ENCODE measurements at regions of chr4 and their contacts with region 1.

Region 1: DNA sequence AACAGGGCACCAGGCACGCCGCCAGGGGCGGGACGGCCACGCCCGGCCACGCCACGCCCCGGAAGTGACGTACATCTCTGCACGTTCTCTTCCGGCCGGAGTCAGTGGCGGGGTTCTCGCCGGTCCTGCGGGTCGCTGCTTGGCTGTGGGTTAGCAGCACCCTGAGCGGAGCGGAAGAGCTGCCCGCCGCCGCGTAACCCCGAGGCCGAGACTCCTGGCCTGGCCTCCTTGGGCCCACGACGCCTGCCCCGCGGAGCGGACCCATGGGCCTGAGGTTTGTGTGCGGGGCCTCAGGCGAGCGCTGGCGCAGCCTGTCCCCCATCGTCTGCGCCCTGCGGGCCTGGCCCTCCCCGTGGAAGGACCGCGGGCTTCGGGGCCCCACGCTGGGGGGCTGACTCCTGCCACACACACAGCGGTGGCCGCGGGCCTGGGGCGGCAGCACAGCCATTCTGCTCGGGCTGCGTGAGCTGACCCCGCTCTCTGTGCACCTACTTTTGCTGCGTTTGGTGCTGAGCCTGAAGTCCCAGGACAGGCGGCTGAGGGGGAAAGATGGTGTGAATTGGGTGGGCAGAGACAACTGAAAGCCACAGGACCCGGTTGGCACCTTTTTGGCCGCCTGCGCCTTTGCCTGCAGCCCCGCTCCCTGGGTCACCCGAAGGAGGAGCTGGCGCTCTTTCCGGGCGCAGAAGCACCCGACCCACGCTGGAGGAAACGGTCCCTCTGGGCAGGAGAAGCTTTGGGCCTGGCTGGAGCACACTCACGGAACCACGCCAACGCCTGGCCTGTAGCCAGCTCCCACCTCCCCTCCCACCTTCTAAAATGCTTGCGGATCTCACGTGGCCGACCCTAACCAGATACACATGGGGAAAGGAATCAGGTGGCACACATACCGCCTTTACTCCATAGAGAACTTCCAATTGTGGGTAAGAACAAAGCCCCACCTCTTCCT is 28.1 kb downstream of the NOP14 start:
- DNase-seq: peak; percentile 97
- ATAC-seq: peak; percentile 54
- H3K4me3 ChIP-seq: peak overlapping the region; percentile 8 to 96 (median 80)
- H3K4me3 Mint-ChIP-seq: peak overlapping the region; percentile 89
- H3K27ac ChIP-seq: peak overlapping the region; percentile 55 to 87
- H3K27ac Mint-ChIP-seq: peak overlapping the region; percentile 87
- H3K4me1 ChIP-seq: peaks cover 39 to 63% of the 10 kb centered on the region in 2 donors
- H3K4me1 Mint-ChIP-seq: peaks cover 55% of the 10 kb centered on the region
- H3K27me3 ChIP-seq: no peaks in the 10 kb centered on the region
- H3K27me3 Mint-ChIP-seq: no peaks in the 10 kb centered on the region
- CTCF ChIP-seq: no peak

Region 2: DNA sequence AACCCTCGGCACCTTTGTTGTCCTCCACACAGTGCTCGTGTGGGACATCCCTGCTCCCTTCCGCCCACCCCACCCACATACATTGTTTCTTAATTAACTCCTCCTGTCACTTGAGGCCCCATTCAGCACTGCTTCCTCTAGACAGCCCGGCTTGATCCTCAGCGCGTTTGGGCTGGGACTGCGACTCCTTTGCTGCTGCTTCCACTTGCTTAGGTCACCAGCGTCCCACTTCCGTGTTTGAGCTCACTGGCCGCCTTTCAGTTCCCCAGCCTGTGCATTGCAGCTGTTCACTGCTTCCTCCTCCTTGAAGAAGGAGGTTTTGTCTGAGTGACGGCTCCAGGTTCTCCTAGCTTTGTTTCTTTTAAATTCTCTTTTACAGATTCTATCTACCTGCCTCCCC is 450.1 kb before region 1 on chr4:
- CTCF ChIA-PET with region 1: no interaction called
- POLR2A ChIA-PET with region 1: no interaction called
- intact Hi-C with region 1: loop called (anchors 10 kb)
- DNase-seq: peak; percentile 90
- ATAC-seq: peak; percentile 93
- H3K4me3 ChIP-seq: peak overlapping the region; percentile 17 to 54 (median 28)
- H3K4me3 Mint-ChIP-seq: peak overlapping the region; percentile 72
- H3K27ac ChIP-seq: peak overlapping the region; percentile 76 to 89
- H3K27ac Mint-ChIP-seq: peak overlapping the region; percentile 85
- H3K4me1 ChIP-seq: peaks cover 78 to 88% of the 10 kb centered on the region in 2 donors
- H3K4me1 Mint-ChIP-seq: peaks cover 85% of the 10 kb centered on the region
- H3K27me3 ChIP-seq: no peaks in the 10 kb centered on the region
- H3K27me3 Mint-ChIP-seq: no peaks in the 10 kb centered on the region
- CTCF ChIP-seq: no peak

Region 3: DNA sequence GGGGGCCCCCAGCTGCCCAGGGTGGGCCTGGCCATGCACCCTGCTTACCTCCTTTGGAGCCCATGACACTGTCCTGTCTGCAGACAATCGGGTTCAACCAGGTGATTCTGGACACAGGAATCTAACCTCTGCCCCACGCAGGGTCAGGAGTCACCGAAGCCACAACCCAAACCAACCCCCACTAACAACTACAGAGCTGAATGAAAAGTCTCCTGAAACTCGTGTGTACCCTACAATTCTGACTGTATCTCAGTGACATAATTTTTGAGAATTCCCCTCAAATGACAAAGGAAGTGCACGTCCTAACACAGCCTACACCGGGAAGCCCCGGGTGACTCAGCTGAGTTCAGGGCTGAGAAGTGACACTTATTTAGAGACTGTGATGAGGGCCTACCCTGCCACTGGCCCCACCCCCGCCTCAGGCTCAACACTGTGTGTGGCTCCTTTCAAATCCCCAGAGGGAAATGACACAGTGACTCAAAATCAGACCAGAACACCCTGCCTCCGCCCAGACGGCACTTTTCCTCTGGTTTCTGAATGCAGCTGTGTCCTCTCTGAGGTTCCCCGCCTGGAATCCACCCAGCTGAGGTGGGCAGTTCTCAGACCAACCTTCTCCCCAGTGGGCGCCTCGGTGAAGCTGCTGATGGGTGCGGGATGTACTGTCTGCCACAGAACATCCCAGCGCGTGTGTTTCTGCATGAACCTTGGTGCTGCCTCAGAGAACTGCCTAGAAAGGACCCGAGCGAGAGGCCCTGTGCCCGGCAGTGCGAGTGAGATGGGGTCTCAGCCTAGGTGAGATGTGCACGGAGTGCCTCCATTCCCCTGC is 188.9 kb before region 1 on chr4:
- CTCF ChIA-PET with region 1: no interaction called
- POLR2A ChIA-PET with region 1: no interaction called
- intact Hi-C with region 1: loop called (anchors 5 kb)
- DNase-seq: peak; percentile 95
- ATAC-seq: peak; percentile 96
- H3K4me3 ChIP-seq: peak overlapping the region in 2 of 5 experiments; percentile 5 to 17
- H3K4me3 Mint-ChIP-seq: peak overlapping the region; percentile 70
- H3K27ac ChIP-seq: peak overlapping the region; percentile 93 to 95
- H3K27ac Mint-ChIP-seq: peak overlapping the region; percentile 93
- H3K4me1 ChIP-seq: peaks cover 30 to 44% of the 10 kb centered on the region in 2 donors
- H3K4me1 Mint-ChIP-seq: peaks cover 46% of the 10 kb centered on the region
- H3K27me3 ChIP-seq: no peaks in the 10 kb centered on the region
- H3K27me3 Mint-ChIP-seq: no peaks in the 10 kb centered on the region
- CTCF ChIP-seq: no peak

Region 4: GRCh38 chr4:2837904-2838496 is 97.1 kb before region 1 on chr4:
- CTCF ChIA-PET with region 1: interaction called, 3 read pairs
- POLR2A ChIA-PET with region 1: interaction called, 3 read pairs
- intact Hi-C with region 1: loop called (anchors 5 kb)
- DNase-seq: peak; percentile 81
- ATAC-seq: peak; percentile 58
- H3K4me3 ChIP-seq: peak overlapping the region in 4 of 5 experiments; percentile 18 to 51 (median 34)
- H3K4me3 Mint-ChIP-seq: peak overlapping the region; percentile 71
- H3K27ac ChIP-seq: peak overlapping the region; percentile 78
- H3K27ac Mint-ChIP-seq: peak overlapping the region; percentile 63
- H3K4me1 ChIP-seq: peaks cover 70 to 76% of the 10 kb centered on the region in 2 donors
- H3K4me1 Mint-ChIP-seq: peaks cover 72% of the 10 kb centered on the region
- H3K27me3 ChIP-seq: no peaks in the 10 kb centered on the region
- H3K27me3 Mint-ChIP-seq: no peaks in the 10 kb centered on the region
- CTCF ChIP-seq: no peak

Region 5: DNA sequence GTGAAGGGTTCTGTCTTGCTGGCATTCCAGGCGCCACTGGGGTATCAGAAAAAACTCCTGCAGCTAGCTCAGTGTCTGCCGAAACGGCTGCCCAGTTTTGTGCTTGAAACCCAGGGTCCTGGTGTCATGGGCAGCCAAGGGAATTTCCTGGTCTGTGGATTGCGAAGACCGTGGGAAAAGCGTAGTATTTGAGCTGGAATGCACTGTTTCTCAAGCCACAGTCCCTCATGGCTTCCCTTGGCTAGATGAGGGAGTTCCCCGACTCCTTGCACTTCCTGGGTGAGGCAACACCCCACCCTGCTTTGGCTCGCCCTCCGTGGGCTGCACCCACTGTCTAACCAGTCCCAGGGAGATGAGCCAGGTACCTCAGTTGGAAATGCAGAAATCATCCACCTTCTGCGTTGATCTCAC is 11.9 kb before region 1 on chr4:
- CTCF ChIA-PET with region 1: interaction called, 5 read pairs
- POLR2A ChIA-PET with region 1: interaction called, 5 read pairs
- intact Hi-C with region 1: loop called (anchors 1 kb)
- DNase-seq: no peak
- ATAC-seq: no peak
- H3K4me3 ChIP-seq: no peak overlapping the region
- H3K4me3 Mint-ChIP-seq: peak overlapping the region; percentile 46
- H3K27ac ChIP-seq: peak overlapping the region; percentile 6 to 49
- H3K27ac Mint-ChIP-seq: peak overlapping the region; percentile 79
- H3K4me1 ChIP-seq: peaks cover 23 to 33% of the 10 kb centered on the region in 2 donors
- H3K4me1 Mint-ChIP-seq: peaks cover 56% of the 10 kb centered on the region
- H3K27me3 ChIP-seq: no peaks in the 10 kb centered on the region
- H3K27me3 Mint-ChIP-seq: no peaks in the 10 kb centered on the region
- CTCF ChIP-seq: no peak

Measured in B cell (primary cell).